Heart left ventricle (tissue), 16 donors: ENCODE measurements at regions of chr17 and their contacts with region 1.

Region 1: GRCh38 chr17:69327060-69327831 is at the start of gene ABCA5:
- DNase-seq: peak; percentile 82 to 93 (median 88)
- ATAC-seq: peak; percentile 95 to 98 (median 96)
- H3K4me3 ChIP-seq: peak within 1 kb of the TSS; percentile 65 to 94 (median 81)
- H3K27ac ChIP-seq: peak within 1 kb of the TSS; percentile 60 to 94 (median 88)
- H3K4me1 ChIP-seq: peaks cover 0 to 25% (median 12%) of the 10 kb centered on the region in 12 donors
- H3K27me3 ChIP-seq: no peaks in the 10 kb centered on the region
- CTCF ChIP-seq: no peak
- POLR2A ChIP-seq: peak in 1 of 2 donors; percentile 84
- total RNA-seq, gene ABCA5: 11.8 to 24.9 (median 18.5) TPM

Region 2: DNA sequence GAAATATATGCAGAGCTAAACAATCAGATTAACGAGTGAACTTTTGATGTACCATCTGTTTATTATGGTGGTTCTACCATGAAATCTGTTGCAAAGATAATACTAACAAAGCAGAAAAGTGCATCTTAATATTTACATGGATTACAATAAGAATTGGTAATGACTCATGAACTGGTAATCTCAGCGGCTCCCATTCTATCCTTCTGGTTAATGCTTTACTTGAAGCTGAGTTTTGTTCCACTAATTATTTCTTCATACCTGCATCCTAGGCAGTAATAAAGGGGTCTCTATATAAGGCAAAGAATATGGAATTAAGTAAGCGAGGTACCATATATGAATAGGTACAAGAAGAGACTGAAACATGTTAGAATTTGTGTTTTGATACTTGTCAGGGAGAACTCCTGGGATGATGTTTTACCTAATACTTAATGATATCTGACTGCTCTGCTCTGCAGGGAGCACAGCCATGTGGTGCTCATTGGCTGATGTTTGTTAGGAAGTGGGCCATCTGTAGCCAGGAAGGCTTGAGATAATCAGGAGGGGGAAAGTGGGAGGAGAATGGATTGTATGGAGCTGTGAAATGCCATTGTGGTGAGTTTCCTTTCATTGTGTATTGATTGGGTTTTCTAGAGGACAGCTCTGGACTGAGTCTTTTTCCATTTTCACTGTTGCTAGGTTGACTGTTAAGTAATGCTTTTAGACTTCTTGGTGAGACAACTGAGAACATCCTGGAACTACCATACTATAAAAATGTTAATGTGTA is 139.8 kb after region 1 on chr17:
- intact Hi-C with region 1: no loop called
- DNase-seq: no peak
- ATAC-seq: peak in 3 of 4 donors; percentile 34 to 83 (median 41)
- H3K4me3 ChIP-seq: no peak overlapping the region
- H3K27ac ChIP-seq: no peak overlapping the region
- H3K4me1 ChIP-seq: peaks cover 0 to 4% (median 0%) of the 10 kb centered on the region in 12 donors
- H3K27me3 ChIP-seq: no peaks in the 10 kb centered on the region
- CTCF ChIP-seq: no peak
- POLR2A ChIP-seq: no peak

Region 3: DNA sequence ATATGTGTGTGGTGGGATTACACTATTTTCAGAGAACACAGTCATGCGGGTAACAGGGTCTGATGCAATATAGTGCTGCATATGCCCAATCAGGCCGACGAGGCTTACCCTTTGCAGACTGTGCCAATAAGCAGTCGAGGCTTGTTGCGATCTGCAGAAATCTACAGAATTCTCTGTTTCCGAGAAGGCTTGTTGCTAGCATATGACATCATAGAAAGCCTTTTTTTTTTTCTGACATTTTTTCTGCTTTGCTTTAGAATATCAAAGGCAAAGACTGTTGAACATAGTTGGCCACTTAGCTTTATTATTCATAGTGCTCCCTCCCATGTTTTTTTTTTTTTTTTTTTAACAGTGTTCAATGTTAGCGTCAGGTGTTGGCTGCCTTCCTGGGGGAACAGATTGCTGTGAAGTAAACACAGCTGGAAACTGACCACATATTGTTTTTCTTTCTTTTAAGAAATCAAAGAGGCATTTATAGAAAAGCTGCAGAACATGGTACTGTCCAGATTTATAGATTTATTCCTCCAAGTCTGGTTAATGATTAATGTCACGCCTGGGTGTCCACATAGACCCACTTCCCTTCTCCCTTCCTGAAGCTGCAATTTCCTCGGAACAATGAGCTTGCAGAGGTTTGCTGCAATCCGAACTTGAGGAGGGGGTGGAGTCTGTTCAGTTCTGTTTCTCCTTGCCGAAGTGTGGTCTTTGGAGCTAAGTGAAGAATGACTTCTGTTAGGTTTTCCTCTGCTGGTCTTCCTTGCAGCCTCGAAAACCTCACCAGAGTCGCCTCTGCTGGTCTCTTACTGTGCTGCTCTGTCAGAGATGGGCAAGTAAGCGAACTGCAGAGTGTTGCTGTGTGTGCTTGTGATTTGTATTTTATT is 174.6 kb after region 1 on chr17:
- intact Hi-C with region 1: loop called in 1 of 10 experiments (anchors 10 kb)
- DNase-seq: peak in 3 of 5 donors; percentile 15 to 31 (median 27)
- ATAC-seq: peak; percentile 38 to 78 (median 52)
- H3K4me3 ChIP-seq: peak overlapping the region in 10 of 12 donors; percentile 8 to 47 (median 29)
- H3K27ac ChIP-seq: peak overlapping the region in 11 of 12 donors; percentile 7 to 52 (median 27)
- H3K4me1 ChIP-seq: peaks cover 0 to 31% (median 10%) of the 10 kb centered on the region in 12 donors
- H3K27me3 ChIP-seq: no peaks in the 10 kb centered on the region
- CTCF ChIP-seq: no peak
- POLR2A ChIP-seq: no peak